Endothelial cell of umbilical vein (primary cell): ENCODE measurements at regions of chr7 and their contacts with region 1.

Region 1: DNA sequence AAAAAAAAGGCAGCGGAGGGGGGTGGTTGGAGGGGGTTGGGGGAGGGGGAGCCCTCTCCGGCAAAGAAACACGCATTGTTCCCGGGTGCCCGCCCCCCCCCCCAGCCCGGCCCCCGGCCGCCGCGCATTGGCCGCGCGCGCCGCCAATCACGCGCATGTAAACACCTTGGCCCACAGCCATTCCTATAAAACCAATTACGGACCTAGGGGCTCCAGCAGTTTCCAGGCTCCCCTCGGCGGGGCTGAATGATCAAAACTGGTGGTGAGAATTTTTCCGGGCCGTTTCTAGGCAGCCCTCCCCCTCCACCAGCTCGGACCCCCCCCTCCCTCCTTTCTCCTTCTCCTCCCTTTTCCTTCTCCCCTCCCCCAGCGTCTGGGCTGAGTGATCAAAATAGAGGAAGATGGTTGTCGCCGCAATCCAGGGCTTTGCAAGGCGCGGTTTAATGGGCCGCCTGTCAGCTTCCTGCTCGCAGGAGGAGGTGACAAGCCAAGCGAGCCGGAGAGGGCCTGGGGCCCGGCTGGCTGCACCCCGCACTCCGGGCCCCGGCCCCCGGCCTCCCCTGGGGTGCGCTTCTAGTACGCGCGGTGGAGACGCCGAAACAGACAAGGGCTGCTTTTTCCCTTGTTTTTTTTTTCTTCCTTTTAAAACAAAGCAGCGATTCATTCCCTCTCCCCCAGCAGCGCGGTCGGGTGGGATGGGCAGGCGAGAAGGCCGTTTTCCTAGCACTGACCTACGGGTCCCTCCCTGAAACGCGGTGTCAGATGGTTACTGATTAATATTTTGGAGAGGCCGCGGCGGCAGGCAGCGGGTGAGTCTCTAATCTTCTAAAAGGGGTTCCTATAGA is 432 bp upstream of the TNRC18 start:
- DNase-seq: peak; percentile 98
- H3K4me3 ChIP-seq: peak overlapping the region; percentile 87 to 94 (median 90)
- H3K27ac ChIP-seq: peak overlapping the region; percentile 72
- H3K4me1 ChIP-seq: peaks cover 6% of the 10 kb centered on the region
- H3K27me3 ChIP-seq: no peaks in the 10 kb centered on the region
- CTCF ChIP-seq: no peak
- POLR2A ChIP-seq: peak; percentile 57

Region 2: GRCh38 chr7:5467645-5468044 is 43.6 kb after region 1 on chr7:
- CTCF ChIA-PET with region 1: no interaction called
- POLR2A ChIA-PET with region 1: no interaction called
- dilution Hi-C with region 1: no loop called
- intact Hi-C with region 1: no loop called
- DNase-seq: no peak
- H3K4me3 ChIP-seq: no peak overlapping the region
- H3K27ac ChIP-seq: no peak overlapping the region
- H3K4me1 ChIP-seq: no peaks in the 10 kb centered on the region
- H3K27me3 ChIP-seq: no peaks in the 10 kb centered on the region
- CTCF ChIP-seq: no peak
- POLR2A ChIP-seq: no peak

Region 3: DNA sequence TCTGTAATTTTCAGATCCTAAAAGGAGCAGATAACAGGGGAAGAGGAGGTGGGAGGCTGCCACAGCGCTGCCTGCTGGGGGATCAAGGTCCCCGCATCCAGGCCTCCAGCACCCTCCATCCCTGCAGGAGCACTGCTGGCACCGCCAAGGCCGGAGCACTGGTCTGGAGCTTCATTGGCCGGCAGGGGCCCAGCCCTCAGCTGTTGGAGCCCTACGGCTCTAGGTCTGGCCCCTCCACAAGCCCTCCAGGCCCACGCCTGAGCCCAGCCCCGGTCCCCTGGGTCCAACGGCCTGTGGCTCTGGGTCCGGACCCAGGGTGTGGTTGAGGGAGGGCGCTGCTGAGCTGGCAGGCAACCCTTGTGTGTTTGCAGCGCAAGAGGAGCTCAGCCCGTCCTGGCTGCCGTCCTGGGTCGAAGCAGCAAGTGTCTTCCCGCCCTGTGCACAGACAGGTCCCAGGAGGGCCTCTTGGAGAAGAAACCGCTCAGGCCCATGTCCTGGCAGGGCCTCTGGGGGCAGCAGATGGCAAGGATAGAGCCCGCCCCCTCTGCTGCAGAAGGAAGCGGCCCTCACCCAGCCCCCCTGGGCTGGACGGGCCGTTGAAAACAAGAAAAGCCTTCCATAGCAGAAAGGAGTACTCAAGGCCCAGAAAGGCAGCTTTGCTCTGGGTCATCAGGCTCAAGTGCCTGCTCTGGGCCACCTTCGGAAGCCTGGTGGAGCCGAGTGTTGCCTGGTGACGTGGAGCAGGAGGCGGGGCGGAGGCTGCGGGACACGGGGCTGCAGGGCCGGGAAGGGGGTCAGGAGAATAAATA is 53.9 kb after region 1 on chr7:
- CTCF ChIA-PET with region 1: interaction called, 3 read pairs
- POLR2A ChIA-PET with region 1: no interaction called
- dilution Hi-C with region 1: no loop called
- intact Hi-C with region 1: loop called (anchors 2 kb)
- DNase-seq: peak; percentile 47
- H3K4me3 ChIP-seq: peak overlapping the region in 1 of 3 experiments; percentile 33
- H3K27ac ChIP-seq: no peak overlapping the region
- H3K4me1 ChIP-seq: no peaks in the 10 kb centered on the region
- H3K27me3 ChIP-seq: no peaks in the 10 kb centered on the region
- CTCF ChIP-seq: peak; percentile 26 to 62
- POLR2A ChIP-seq: no peak